Naive thymus-derived CD4-positive, alpha-beta T cell (primary cell): ENCODE measurements at regions of chr1 and their contacts with region 1.

Region 1: DNA sequence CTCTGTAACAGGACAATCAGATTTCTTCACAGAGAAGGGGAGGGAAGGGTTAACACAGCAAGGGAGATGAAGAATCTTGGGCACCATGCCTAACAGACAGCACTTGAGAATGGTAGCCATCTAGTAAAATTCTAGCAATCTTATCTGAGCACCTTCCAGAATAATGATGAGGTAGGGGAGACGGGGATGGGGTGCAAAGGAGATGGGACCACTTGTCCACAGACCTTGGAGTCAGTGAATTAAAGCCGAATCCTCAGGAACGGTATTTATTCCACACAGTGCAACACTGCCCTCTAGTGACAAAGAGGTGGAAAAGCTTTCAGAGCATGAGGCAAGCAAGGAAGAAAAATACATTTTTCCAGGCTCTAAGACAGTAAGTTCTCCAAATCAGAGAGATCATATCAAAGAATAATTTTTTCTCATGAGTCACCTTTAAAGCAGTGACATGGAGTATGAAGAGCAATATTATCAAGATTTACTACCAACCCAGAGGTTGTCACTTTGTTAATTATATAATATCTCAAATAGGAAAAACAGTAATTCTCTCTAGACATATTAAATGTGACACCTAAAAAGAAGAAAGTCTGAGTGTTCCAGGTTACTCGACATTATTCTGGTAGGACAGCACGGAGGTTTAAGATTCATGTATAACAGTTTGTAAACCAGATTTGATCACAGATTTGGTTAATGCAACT is 43.3 kb upstream of the LPAR3 start:
- DNase-seq: peak in 7 of 9 donors; percentile 38 to 66 (median 57)
- ATAC-seq: peak; percentile 91
- H3K4me3 ChIP-seq: no peak overlapping the region
- H3K4me3 Mint-ChIP-seq: peak overlapping the region in 2 of 10 donors; percentile 5 to 51
- H3K27ac ChIP-seq: no peak overlapping the region
- H3K27ac Mint-ChIP-seq: peak overlapping the region in 1 of 9 donors; percentile 27
- H3K4me1 ChIP-seq: no peaks in the 10 kb centered on the region
- H3K4me1 Mint-ChIP-seq: peaks cover 0 to 5% (median 0%) of the 10 kb centered on the region in 7 donors
- H3K27me3 ChIP-seq: no peaks in the 10 kb centered on the region
- H3K27me3 Mint-ChIP-seq: no peaks in the 10 kb centered on the region

Region 2: GRCh38 chr1:83931658-83932253 is 1004.5 kb before region 1 on chr1:
- CTCF ChIA-PET with region 1: interaction called, 4 read pairs
- POLR2A ChIA-PET with region 1: no interaction called
- intact Hi-C with region 1: loop called in 1 of 2 experiments (anchors 1 kb)
- DNase-seq: peak in 7 of 9 donors; percentile 18 to 60 (median 45)
- ATAC-seq: peak; percentile 79
- H3K4me3 ChIP-seq: no peak overlapping the region
- H3K4me3 Mint-ChIP-seq: no peak overlapping the region
- H3K27ac ChIP-seq: no peak overlapping the region
- H3K27ac Mint-ChIP-seq: no peak overlapping the region
- H3K4me1 ChIP-seq: no peaks in the 10 kb centered on the region
- H3K4me1 Mint-ChIP-seq: no peaks in the 10 kb centered on the region
- H3K27me3 ChIP-seq: no peaks in the 10 kb centered on the region
- H3K27me3 Mint-ChIP-seq: peaks cover 4 to 19% (median 7%) of the 10 kb centered on the region in 5 donors

Region 3: GRCh38 chr1:84442256-84442655 is 494.0 kb before region 1 on chr1:
- CTCF ChIA-PET with region 1: interaction called, 9 read pairs
- POLR2A ChIA-PET with region 1: interaction called, 3 read pairs
- intact Hi-C with region 1: loop called (anchors 1 kb)
- DNase-seq: peak in 7 of 9 donors; percentile 51 to 77 (median 66)
- ATAC-seq: peak; percentile 99
- H3K4me3 ChIP-seq: no peak overlapping the region
- H3K4me3 Mint-ChIP-seq: peak overlapping the region; percentile 14 to 66 (median 41)
- H3K27ac ChIP-seq: no peak overlapping the region
- H3K27ac Mint-ChIP-seq: peak overlapping the region in 5 of 9 donors; percentile 35 to 81 (median 72)
- H3K4me1 ChIP-seq: peaks cover 10 to 21% of the 10 kb centered on the region in 2 donors
- H3K4me1 Mint-ChIP-seq: peaks cover 5 to 24% (median 16%) of the 10 kb centered on the region in 7 donors
- H3K27me3 ChIP-seq: no peaks in the 10 kb centered on the region
- H3K27me3 Mint-ChIP-seq: peaks cover 0 to 16% (median 11%) of the 10 kb centered on the region in 5 donors

Region 4: GRCh38 chr1:84668185-84668584 is 268.1 kb before region 1 on chr1:
- CTCF ChIA-PET with region 1: no interaction called
- POLR2A ChIA-PET with region 1: no interaction called
- intact Hi-C with region 1: loop called in 1 of 2 experiments (anchors 1 kb)
- DNase-seq: peak in 2 of 9 donors; percentile 11 to 24
- ATAC-seq: peak; percentile 51
- H3K4me3 ChIP-seq: no peak overlapping the region
- H3K4me3 Mint-ChIP-seq: no peak overlapping the region
- H3K27ac ChIP-seq: no peak overlapping the region
- H3K27ac Mint-ChIP-seq: peak overlapping the region in 1 of 9 donors; percentile 34
- H3K4me1 ChIP-seq: peaks cover 0 to 2% of the 10 kb centered on the region in 2 donors
- H3K4me1 Mint-ChIP-seq: peaks cover 0 to 14% (median 10%) of the 10 kb centered on the region in 7 donors
- H3K27me3 ChIP-seq: no peaks in the 10 kb centered on the region
- H3K27me3 Mint-ChIP-seq: no peaks in the 10 kb centered on the region

Region 5: GRCh38 chr1:84772428-84772943 is 163.8 kb before region 1 on chr1:
- CTCF ChIA-PET with region 1: no interaction called
- POLR2A ChIA-PET with region 1: no interaction called
- intact Hi-C with region 1: loop called (anchors 1 kb)
- DNase-seq: peak; percentile 51 to 74 (median 64)
- ATAC-seq: peak; percentile 83
- H3K4me3 ChIP-seq: no peak overlapping the region
- H3K4me3 Mint-ChIP-seq: no peak overlapping the region
- H3K27ac ChIP-seq: no peak overlapping the region
- H3K27ac Mint-ChIP-seq: no peak overlapping the region
- H3K4me1 ChIP-seq: no peaks in the 10 kb centered on the region
- H3K4me1 Mint-ChIP-seq: peaks cover 0 to 4% (median 0%) of the 10 kb centered on the region in 7 donors
- H3K27me3 ChIP-seq: no peaks in the 10 kb centered on the region
- H3K27me3 Mint-ChIP-seq: peaks cover 5 to 31% (median 9%) of the 10 kb centered on the region in 5 donors

Region 6: DNA sequence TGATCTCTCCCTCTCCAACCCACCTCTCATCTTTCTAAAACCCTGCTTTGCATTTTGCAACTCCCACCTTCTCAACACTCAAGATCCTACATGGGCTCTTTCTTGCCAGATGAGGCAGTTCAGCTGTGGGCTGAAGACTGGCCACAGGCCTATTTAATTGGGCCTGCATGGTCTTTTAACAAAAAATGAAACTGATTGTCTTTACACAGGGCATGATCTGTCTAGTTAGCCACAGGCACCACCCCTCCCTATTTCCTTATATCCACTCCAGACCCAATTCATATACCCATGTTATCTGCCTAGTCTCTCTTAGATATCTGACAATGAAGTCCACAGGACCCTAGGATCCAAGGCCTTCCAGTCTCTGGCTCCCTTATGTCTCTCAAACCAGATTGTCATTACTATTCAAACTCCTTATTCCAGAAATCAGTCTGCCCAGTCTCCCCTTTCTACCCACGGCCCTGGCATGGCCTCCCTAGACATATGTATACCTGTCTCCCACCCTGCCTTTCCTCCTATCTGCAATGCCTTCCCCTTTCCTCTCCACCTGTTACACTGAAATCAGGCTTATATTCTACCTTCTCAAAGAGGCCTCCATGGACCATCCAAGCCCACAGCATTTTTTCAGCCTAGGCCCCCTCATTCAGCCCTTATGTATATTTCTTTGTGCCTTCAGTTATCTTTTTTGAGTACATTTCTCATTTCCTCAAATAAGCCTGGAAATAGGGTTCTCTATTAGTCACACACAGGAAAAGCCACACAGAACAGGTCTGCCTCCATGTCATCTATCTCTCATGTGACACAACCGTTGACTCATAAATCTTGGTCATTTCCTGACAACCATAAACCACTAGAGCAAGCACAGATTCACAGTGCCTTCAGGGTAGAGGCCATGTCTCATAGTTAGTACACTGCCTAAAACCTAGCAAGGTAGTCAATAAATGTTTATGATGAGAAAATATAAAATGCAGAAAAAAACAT is 82.2 kb before region 1 on chr1:
- CTCF ChIA-PET with region 1: no interaction called
- POLR2A ChIA-PET with region 1: no interaction called
- intact Hi-C with region 1: loop called in 1 of 2 experiments (anchors 2 kb)
- DNase-seq: peak in 8 of 9 donors; percentile 16 to 56 (median 41)
- ATAC-seq: peak; percentile 96
- H3K4me3 ChIP-seq: no peak overlapping the region
- H3K4me3 Mint-ChIP-seq: peak overlapping the region in 6 of 10 donors; percentile 0 to 70 (median 14)
- H3K27ac ChIP-seq: peak overlapping the region; percentile 5
- H3K27ac Mint-ChIP-seq: peak overlapping the region; percentile 54 to 98 (median 87)
- H3K4me1 ChIP-seq: peaks cover 14 to 17% of the 10 kb centered on the region in 2 donors
- H3K4me1 Mint-ChIP-seq: peaks cover 23 to 52% (median 45%) of the 10 kb centered on the region in 7 donors
- H3K27me3 ChIP-seq: no peaks in the 10 kb centered on the region
- H3K27me3 Mint-ChIP-seq: peaks cover 0 to 8% (median 0%) of the 10 kb centered on the region in 5 donors